Activated naive CD4-positive, alpha-beta T cell treated with anti-CD3 and anti-CD28 coated beads, Interleukin-2, amount 10 ng/mL, durations not matched to agents 7 days and 5 days (primary cell): ENCODE measurements at regions of chr17 and their contacts with region 1.

Region 1: GRCh38 chr17:40075201-40075941 is 12.6 kb downstream of the THRA start:
- DNase-seq: peak; percentile 73
- H3K4me3 Mint-ChIP-seq: no peak overlapping the region
- H3K27ac Mint-ChIP-seq: peak overlapping the region; percentile 72
- H3K4me1 Mint-ChIP-seq: peaks cover 18% of the 10 kb centered on the region
- H3K27me3 Mint-ChIP-seq: peaks cover 3% of the 10 kb centered on the region

Region 2: DNA sequence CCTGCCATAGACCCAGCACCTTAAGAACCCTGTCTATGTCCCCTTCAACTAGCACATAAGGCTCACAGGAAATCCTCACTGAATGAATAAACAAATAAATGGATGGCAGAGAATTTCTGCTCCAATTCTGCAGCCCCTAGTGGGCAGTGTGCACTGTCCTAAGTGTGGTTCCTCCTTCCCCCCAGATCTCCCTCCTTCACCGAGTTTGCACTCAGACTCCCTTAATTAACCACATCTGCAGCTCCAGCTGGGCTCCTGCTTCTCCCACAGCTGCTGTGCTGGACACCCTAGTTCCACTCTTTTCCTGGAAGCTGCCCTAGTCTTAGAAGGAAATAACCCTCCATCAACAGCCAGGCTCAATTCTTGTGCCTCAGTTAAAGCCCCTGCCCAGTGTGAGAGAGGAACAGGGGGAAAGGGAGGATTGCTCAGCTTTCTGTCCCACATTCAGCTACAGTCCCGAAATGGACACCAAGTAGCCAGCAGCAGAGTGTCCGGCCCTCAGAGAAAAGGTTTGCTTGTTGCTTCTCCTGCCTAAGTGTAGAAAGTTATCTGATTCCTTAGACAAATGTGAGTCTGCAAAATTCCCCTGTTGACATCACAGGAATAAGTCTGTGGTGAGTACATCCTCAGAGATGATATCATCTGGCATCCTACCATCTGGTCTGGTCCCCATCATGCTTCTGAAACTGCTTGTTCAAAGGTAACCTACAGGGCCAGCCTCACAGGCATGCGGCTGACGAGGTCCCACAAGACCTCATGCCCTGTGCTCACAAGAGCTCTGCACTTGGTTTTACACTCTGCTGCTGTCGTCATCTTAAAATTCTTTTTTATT is 135.6 kb before region 1 on chr17:
- CTCF ChIA-PET with region 1: no interaction called
- DNase-seq: peak; percentile 63
- H3K4me3 Mint-ChIP-seq: no peak overlapping the region
- H3K27ac Mint-ChIP-seq: peak overlapping the region; percentile 45
- H3K4me1 Mint-ChIP-seq: peaks cover 24% of the 10 kb centered on the region
- H3K27me3 Mint-ChIP-seq: peaks cover 41% of the 10 kb centered on the region

Region 3: DNA sequence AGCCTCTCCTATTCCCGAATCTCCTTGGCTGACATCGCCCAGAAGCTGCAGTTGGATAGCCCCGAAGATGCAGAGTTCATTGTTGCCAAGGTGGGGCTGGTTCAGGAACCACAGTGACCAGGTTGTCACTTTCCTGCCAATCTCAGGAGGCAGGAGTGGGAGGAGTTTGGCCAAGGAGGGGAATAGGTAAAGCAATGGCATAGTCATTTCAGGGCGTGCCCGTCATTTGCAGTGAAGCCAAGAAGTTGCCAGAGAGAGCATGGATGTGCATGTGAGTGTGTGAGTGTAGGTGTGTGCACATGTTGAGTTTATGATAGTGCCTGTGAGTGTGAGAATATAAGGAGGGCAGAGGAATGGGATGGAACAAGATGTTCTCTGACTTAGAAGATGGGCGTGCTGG is 79.9 kb before region 1 on chr17:
- CTCF ChIA-PET with region 1: no interaction called
- DNase-seq: no peak
- H3K4me3 Mint-ChIP-seq: no peak overlapping the region
- H3K27ac Mint-ChIP-seq: no peak overlapping the region
- H3K4me1 Mint-ChIP-seq: no peaks in the 10 kb centered on the region
- H3K27me3 Mint-ChIP-seq: no peaks in the 10 kb centered on the region

Region 4: DNA sequence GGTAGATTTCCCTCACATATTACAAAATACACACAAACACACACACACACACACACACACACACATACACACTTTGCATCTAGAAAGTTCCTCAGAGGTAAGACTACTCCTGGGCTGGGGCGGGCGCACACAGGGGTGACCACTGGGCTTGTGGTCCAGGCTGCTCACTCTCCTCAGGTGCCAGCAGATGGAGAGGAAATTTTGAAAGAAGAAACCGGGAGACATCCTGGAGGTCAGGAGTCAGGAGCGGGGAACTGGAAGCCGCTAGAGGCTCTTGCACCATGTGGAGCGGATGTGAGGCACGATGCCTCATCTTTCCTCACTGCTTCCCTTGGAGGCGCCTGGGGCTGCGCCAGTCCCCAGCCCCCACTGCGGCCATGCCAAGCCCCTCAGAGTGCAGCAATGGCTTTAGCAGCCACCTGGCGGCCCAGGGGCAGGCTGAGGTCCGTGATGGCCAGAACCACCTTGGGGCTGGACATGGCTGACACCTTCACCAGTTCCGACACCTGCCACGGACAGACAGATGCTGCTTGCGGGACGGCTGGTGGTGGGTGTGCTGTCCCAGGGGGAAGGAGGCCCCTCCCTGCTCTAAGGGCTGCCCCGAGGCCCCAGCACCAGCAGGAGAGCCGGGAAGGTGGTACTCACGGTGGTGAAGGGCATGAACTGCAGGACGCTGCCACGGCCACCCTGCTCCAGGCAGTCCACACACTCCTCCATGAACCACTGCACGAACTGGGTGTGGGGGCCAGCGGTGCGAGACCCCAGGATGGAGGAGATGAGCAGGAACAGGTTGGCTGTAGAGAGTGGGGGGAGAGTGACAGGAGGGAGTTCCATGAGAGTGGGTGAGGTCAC is 56.0 kb before region 1 on chr17:
- CTCF ChIA-PET with region 1: interaction called, 28 read pairs
- DNase-seq: no peak
- H3K4me3 Mint-ChIP-seq: no peak overlapping the region
- H3K27ac Mint-ChIP-seq: peak overlapping the region; percentile 58
- H3K4me1 Mint-ChIP-seq: peaks cover 2% of the 10 kb centered on the region
- H3K27me3 Mint-ChIP-seq: peaks cover 11% of the 10 kb centered on the region

Region 5: DNA sequence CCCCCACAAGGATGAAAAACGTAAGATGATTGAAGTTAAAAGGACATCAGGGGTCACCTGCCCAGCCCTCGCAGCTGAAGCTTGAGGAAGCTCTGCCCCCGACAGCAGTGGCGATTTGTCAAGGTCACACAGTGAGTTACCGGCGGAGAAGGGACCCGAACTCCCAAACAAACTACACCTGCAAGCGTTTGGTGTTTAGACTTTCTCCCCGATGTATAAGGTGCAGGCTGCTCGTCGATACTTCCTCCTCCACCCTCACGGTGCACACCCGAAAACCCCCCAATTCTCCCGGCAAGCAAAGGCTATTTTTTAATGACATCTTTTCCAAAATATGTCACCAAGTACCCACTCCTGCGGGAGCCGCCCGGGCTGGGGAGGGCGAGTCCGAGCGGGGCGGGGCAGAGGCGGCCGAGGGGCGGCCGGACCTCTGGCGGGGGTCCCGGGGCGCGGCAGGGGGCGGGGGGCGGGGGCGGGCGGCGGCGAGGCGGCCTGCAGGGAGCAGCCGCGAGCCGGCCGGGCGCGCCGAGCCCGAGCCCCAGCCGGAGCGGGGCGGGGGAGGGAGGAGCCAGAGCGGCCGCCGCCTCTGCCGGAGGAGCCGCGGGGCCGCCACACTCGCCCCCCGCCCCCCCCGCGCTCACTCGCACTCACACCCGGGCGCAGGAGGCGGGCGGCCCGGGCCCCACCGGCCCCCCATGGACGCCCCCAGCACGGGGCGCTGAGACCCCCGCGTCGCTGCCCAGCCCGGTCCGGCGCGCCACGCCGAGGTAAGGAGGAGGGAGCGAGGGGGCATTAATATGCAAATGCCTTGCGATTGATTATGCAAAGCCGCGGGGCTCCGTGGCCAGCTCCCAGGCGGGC is 12.8 kb before region 1 on chr17 and contains the start of gene THRA:
- CTCF ChIA-PET with region 1: interaction called, 79 read pairs
- DNase-seq: peak; percentile 77
- H3K4me3 Mint-ChIP-seq: peak within 1 kb of the TSS; percentile 82
- H3K27ac Mint-ChIP-seq: peak within 1 kb of the TSS; percentile 24
- H3K4me1 Mint-ChIP-seq: peaks cover 39% of the 10 kb centered on the region
- H3K27me3 Mint-ChIP-seq: peaks cover 71% of the 10 kb centered on the region

Region 6: DNA sequence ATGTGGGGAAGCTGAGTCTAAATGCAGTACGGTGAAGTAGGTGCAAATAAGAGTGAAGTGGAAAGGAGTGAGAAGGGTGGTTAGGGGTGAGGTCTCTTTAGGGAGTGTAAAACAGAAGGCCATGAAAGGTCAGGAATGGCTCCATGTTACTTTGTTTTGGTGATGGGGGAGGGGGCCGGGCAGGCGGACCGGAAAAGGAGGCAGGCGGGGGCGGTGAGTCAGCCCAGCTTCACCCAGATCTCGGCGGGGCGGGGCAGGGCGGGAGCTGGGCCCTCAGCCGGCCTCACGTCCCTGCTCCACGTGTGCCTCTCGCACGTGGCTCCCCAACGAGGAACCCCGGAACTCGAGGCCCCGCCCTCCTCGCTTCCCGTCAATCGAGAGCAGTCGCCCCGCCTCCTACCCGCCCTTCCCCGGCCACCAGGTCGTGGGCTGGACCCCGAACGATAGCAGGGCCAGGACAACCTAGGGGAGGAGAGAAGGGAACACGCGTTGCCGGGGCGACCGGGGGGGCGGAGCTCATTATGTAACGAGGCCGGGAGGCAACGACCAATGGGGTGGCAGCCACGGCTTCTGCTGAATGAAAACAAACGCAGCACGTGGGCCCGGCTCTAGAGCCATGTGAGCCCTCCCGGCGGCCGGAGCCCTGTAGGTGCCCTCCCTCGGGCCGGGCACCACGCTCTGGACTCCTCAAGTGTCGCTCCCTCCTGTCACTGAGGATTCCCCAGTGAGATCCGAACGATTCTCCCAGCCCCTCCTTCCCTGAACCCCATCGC is 23.7 kb after region 1 on chr17:
- CTCF ChIA-PET with region 1: interaction called, 15 read pairs
- DNase-seq: peak; percentile 99
- H3K4me3 Mint-ChIP-seq: peak overlapping the region; percentile 81
- H3K27ac Mint-ChIP-seq: peak overlapping the region; percentile 87
- H3K4me1 Mint-ChIP-seq: peaks cover 91% of the 10 kb centered on the region
- H3K27me3 Mint-ChIP-seq: peaks cover 26% of the 10 kb centered on the region

Region 7: DNA sequence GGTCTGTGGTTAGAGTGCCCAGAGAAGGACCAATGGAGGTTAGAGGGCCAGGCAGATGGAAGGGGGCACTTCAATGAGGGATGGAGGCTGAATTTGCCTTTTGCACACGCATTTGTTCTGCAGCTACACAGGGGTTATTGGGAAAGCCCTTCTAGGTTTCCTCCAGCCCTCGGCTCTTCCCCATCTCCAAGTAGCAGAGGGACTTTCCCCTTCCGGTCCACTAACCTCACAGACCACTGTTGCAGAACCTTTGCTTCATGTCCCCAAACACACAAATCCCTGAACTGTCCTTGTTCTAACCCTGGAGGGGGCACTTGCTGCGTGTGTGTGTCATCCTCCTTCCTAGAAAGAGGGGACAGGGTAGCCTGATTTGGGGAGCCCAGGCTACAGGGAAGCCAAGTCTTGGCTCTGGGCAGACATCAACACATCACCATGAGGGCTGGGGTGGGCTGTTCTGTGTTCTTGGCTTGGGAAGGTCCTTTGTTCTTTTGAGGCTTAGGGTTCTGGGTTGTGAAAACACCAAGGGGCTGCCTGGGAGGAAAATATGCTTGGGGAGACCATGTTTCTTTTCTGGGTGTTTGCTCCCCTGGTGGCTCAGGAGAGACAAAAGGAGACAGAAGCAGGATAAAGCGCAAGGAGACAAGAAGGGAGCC is 32.3 kb after region 1 on chr17:
- CTCF ChIA-PET with region 1: interaction called, 19 read pairs
- DNase-seq: no peak
- H3K4me3 Mint-ChIP-seq: peak overlapping the region; percentile 29
- H3K27ac Mint-ChIP-seq: peak overlapping the region; percentile 95
- H3K4me1 Mint-ChIP-seq: peaks cover 97% of the 10 kb centered on the region
- H3K27me3 Mint-ChIP-seq: peaks cover 43% of the 10 kb centered on the region